ENCODE measurements at regions of chr19 and their contacts with region 1.

Region 1: GRCh38 chr19:36772311-36773222 is at the start of gene ZNF850:
- DNase-seq: peak; percentile 95
- H3K4me3 Mint-ChIP-seq: peak within 1 kb of the TSS; percentile 91
- H3K27ac Mint-ChIP-seq: peak within 1 kb of the TSS; percentile 83
- H3K4me1 Mint-ChIP-seq: peaks cover 21% of the 10 kb centered on the region
- H3K27me3 Mint-ChIP-seq: no peaks in the 10 kb centered on the region
- total RNA-seq, gene ZNF850: 6.7 TPM

Region 2: GRCh38 chr19:36797786-36798108 is 25.2 kb after region 1 on chr19:
- CTCF ChIA-PET with region 1: no interaction called
- POLR2A ChIA-PET with region 1: no interaction called
- intact Hi-C with region 1: loop called (anchors 1 kb)
- DNase-seq: no peak
- H3K4me3 Mint-ChIP-seq: peak overlapping the region; percentile 80
- H3K27ac Mint-ChIP-seq: peak overlapping the region; percentile 89
- H3K4me1 Mint-ChIP-seq: peaks cover 8% of the 10 kb centered on the region
- H3K27me3 Mint-ChIP-seq: no peaks in the 10 kb centered on the region

Region 3: GRCh38 chr19:37077934-37078725 is 305.6 kb after region 1 on chr19 and contains the start of gene ZNF420:
- CTCF ChIA-PET with region 1: no interaction called
- POLR2A ChIA-PET with region 1: no interaction called
- intact Hi-C with region 1: loop called (anchors 1 kb)
- DNase-seq: peak; percentile 93
- H3K4me3 Mint-ChIP-seq: peak within 1 kb of the TSS; percentile 94
- H3K27ac Mint-ChIP-seq: peak within 1 kb of the TSS; percentile 79
- H3K4me1 Mint-ChIP-seq: peaks cover 31% of the 10 kb centered on the region
- H3K27me3 Mint-ChIP-seq: no peaks in the 10 kb centered on the region
- total RNA-seq, gene ZNF420: 6.5 to 8.7 TPM